Heart right ventricle (tissue), 16 donors: ENCODE measurements at regions of chr17 and their contacts with region 1.

Region 1: GRCh38 chr17:58517734-58518609 is 3.5 kb upstream of the MTMR4 start:
- DNase-seq: peak; percentile 99 to 100
- ATAC-seq: peak; percentile 88 to 94 (median 92)
- H3K4me3 ChIP-seq: peak overlapping the region; percentile 52 to 96 (median 70)
- H3K27ac ChIP-seq: peak overlapping the region; percentile 92 to 98 (median 94)
- H3K4me1 ChIP-seq: peaks cover 25 to 63% (median 60%) of the 10 kb centered on the region in 9 donors
- H3K27me3 ChIP-seq: no peaks in the 10 kb centered on the region
- CTCF ChIP-seq: peak in 1 of 9 donors; percentile 24

Region 2: DNA sequence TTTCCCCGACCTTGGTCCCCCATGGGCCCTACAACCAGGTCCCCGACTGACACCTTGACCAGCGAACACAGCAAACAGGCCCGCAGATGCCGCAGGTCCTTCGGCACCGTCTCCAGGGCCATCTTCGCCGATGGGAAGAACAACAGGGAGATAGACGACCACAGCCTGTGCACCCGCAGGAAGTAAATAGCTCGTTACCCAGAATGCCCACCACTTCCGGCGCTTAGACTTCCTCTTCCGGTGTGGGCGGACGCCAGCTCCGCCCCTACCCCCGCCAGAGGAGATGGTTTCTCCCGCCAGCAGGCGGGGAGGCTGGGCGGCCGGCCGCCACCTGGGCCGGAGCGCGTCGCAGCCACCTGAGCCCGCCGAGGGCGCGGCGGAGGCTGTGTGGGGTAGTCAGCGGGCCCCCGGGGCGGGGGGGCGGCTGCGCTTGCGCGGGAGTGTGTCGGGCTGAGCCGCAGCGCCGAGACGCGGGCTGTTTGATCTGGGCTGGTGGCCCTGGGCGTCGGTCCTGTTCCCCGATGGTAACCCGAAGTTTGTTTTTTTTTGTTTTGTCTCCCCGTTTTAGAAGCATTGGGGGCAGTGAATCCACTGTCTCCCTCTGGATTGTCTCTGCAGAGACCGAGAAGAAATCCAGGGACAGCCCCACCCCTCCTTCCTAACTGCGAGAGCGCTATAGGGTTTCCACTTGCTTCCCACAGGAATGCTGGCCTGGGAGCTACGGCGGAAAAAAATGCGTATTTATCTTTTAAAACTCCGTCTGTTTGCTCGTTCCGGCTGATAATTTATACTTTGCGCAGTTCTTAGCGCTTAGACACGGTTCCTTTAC is 165.7 kb before region 1 on chr17 and contains the start of gene SUPT4H1:
- intact Hi-C with region 1: loop called in 2 of 10 experiments (anchors 5 to 10 kb)
- DNase-seq: peak; percentile 87 to 88
- ATAC-seq: peak; percentile 97 to 98 (median 98)
- H3K4me3 ChIP-seq: peak within 1 kb of the TSS; percentile 73 to 96 (median 82)
- H3K27ac ChIP-seq: peak within 1 kb of the TSS; percentile 83 to 98 (median 94)
- H3K4me1 ChIP-seq: peaks cover 0 to 35% (median 17%) of the 10 kb centered on the region in 9 donors
- H3K27me3 ChIP-seq: no peaks in the 10 kb centered on the region
- CTCF ChIP-seq: peak in 3 of 9 donors; percentile 8 to 30 (median 15)
- total RNA-seq, gene SUPT4H1: 49.0 to 73.4 (median 59.8) TPM

Region 3: DNA sequence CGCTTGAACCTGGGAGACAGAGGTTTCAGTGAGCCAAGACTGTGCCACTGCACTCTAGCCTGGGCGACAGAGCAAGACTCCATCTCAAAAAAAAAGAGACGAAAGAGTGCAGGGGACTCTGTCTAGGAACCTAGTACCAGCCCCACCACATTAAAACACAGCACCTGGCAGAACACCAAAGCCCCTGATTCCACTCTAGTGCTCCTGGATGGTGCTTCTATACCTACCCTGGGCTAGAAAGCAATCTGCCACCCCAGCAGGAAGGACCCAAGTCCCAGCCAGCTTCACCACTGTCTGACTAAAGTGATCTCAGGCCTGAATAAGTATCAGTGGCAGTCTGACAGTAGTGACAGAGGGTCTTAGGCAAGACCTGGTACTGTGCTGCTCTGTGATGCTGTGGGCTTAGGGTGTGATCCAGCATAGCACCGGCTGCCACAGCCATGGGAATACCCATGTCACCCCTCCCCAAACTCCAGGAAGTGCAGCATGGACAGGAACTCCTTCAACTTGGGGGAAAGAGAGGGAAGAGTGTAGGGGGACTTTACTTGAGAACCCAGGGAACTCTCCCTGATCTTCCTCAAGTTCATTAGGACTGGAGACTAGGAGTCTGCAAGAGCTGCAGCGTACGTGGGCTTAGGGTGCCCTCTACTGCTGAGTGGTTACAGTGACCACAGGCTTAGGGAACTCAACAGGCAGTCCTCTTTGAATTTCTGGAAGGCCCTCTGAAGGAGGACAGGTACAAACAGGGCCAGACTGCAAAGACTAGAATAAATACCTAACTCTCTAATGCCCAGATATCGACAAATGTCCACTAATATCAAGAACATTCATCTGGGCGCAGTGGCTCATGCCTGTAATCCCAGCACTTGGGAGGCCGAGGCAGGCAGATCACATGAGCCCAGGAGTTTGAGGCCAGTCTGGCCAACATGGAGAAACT is 70.7 kb before region 1 on chr17:
- intact Hi-C with region 1: no loop called
- DNase-seq: peak; percentile 35 to 57
- ATAC-seq: peak; percentile 70 to 89 (median 80)
- H3K4me3 ChIP-seq: no peak overlapping the region
- H3K27ac ChIP-seq: no peak overlapping the region
- H3K4me1 ChIP-seq: no peaks in the 10 kb centered on the region
- H3K27me3 ChIP-seq: peaks cover 0 to 9% (median 0%) of the 10 kb centered on the region in 7 donors
- CTCF ChIP-seq: peak; percentile 11 to 81 (median 64)

Region 4: GRCh38 chr17:58587702-58588254 is 69.8 kb after region 1 on chr17:
- intact Hi-C with region 1: loop called in 3 of 10 experiments (anchors 2 to 10 kb)
- DNase-seq: peak; percentile 39 to 40
- ATAC-seq: peak in 6 of 8 donors; percentile 41 to 79 (median 62)
- H3K4me3 ChIP-seq: no peak overlapping the region
- H3K27ac ChIP-seq: no peak overlapping the region
- H3K4me1 ChIP-seq: no peaks in the 10 kb centered on the region
- H3K27me3 ChIP-seq: no peaks in the 10 kb centered on the region
- CTCF ChIP-seq: peak; percentile 85 to 96 (median 94)

Region 5: DNA sequence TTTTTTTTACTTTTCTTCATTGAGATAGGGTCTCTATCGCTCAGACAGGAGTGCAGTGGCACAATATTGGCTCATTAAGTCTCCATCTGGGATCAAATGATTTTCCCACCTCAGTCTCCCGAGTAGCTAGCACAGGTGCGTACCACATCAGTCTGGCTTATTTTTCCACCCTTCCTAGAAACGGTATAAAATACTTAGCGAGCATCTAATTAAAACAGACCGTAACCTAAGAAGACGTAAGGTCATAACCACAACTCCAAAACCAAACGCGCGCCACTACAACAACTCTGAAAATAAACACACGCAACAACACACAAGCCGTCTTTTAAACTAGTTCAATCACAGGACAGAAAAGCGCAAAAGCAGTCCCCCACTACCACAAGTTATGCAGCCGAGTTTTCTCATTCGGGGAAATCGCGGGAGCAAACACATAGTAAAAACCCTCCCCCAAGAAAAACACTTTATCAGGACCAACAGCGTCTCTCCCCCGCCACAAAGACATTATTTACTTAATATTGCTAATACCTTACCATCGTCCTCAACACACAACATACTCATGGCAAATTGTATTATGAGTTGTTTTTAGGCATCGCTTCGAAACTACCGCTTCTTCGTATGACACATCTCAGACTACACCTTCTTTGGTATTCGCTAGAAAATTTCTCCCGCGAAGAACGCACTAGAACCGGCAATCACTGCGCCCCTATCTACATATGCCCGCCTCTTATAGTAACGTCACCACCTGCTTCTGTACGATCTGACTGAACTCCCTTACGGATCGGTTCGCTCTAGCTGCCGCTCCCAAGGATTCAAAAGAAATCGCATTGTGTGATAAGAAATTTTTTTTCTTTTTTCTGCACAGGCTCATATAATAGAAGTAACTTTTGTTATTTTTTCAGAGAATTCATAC is 141.1 kb after region 1 on chr17:
- intact Hi-C with region 1: loop called in 1 of 10 experiments (anchors 1 kb)
- DNase-seq: peak; percentile 16 to 92
- ATAC-seq: peak; percentile 95 to 98 (median 96)
- H3K4me3 ChIP-seq: peak overlapping the region in 9 of 10 donors; percentile 28 to 58 (median 49)
- H3K27ac ChIP-seq: peak overlapping the region; percentile 6 to 93 (median 78)
- H3K4me1 ChIP-seq: peaks cover 0 to 15% (median 3%) of the 10 kb centered on the region in 9 donors
- H3K27me3 ChIP-seq: no peaks in the 10 kb centered on the region
- CTCF ChIP-seq: no peak

Region 6: DNA sequence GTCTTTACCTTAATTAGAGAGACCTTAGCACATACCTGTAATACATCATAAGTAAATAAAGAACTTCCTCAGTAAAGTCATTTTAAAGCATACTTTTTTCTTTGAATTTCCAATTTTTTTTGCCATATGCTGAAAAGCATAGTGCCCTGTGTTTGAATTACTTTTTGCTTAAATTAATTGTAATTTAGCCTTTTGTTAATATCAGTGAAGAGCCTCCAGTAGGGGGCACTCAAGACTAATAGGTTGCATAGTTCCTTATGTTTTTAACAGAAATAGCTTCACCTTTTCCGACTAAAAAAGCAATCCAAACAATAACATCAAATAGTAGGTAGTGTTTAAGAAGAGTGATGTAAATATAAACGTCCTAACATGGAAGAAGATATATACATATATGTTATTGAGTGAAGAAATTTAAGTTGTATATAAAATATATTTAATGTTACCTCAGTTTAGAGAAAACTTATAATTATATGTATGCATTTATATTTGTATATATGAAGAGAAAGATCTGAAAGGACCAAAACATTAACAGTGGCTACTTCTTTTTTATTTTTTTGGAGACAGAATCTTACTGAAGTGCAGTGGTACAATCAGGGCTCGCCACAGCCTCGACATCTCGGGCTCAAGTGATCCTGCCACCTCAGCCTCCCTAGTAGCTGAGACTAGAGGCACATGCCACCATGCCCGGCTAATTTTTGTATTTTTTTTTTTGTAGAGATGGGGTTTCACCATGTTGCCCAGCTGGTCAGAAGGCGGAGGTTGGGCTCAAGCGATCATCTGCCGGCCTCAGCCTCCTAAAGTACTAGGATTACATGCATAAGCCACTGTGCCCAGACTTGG is 193.2 kb after region 1 on chr17:
- intact Hi-C with region 1: loop called in 1 of 10 experiments (anchors 5 kb)
- DNase-seq: peak in 1 of 2 donors; percentile 21
- ATAC-seq: no peak
- H3K4me3 ChIP-seq: no peak overlapping the region
- H3K27ac ChIP-seq: no peak overlapping the region
- H3K4me1 ChIP-seq: no peaks in the 10 kb centered on the region
- H3K27me3 ChIP-seq: no peaks in the 10 kb centered on the region
- CTCF ChIP-seq: peak; percentile 40 to 83 (median 74)

Region 7: GRCh38 chr17:59106463-59107305 is 588.7 kb after region 1 on chr17 and contains the start of gene TRIM37:
- intact Hi-C with region 1: loop called in 1 of 10 experiments (anchors 5 kb)
- DNase-seq: peak; percentile 97 to 98
- ATAC-seq: peak; percentile 99 to 100 (median 99)
- H3K4me3 ChIP-seq: peak within 1 kb of the TSS; percentile 64 to 97 (median 84)
- H3K27ac ChIP-seq: peak within 1 kb of the TSS; percentile 75 to 95 (median 90)
- H3K4me1 ChIP-seq: peaks cover 0 to 35% (median 23%) of the 10 kb centered on the region in 9 donors
- H3K27me3 ChIP-seq: no peaks in the 10 kb centered on the region
- CTCF ChIP-seq: peak in 2 of 9 donors; percentile 6 to 10
- total RNA-seq, gene TRIM37: 15.2 to 22.2 (median 18.1) TPM